ENCODE measurements at regions of chr11 and their contacts with region 1.

Region 1: GRCh38 chr11:103035791-103036434 is 56.0 kb downstream of the DCUN1D5 start:
- DNase-seq: peak; percentile 76
- H3K4me3 Mint-ChIP-seq: peak overlapping the region; percentile 17
- H3K27ac Mint-ChIP-seq: peak overlapping the region; percentile 90
- H3K4me1 Mint-ChIP-seq: peaks cover 26% of the 10 kb centered on the region
- H3K27me3 Mint-ChIP-seq: peaks cover 4% of the 10 kb centered on the region

Region 2: GRCh38 chr11:102577182-102577581 is 458.7 kb before region 1 on chr11:
- CTCF ChIA-PET with region 1: no interaction called
- intact Hi-C with region 1: no loop called
- DNase-seq: no peak
- H3K4me3 Mint-ChIP-seq: no peak overlapping the region
- H3K27ac Mint-ChIP-seq: peak overlapping the region; percentile 34
- H3K4me1 Mint-ChIP-seq: peaks cover 29% of the 10 kb centered on the region
- H3K27me3 Mint-ChIP-seq: no peaks in the 10 kb centered on the region

Region 3: GRCh38 chr11:102599642-102600261 is 436.2 kb before region 1 on chr11:
- CTCF ChIA-PET with region 1: no interaction called
- intact Hi-C with region 1: loop called (anchors 10 kb)
- DNase-seq: peak; percentile 43
- H3K4me3 Mint-ChIP-seq: no peak overlapping the region
- H3K27ac Mint-ChIP-seq: peak overlapping the region; percentile 75
- H3K4me1 Mint-ChIP-seq: peaks cover 27% of the 10 kb centered on the region
- H3K27me3 Mint-ChIP-seq: no peaks in the 10 kb centered on the region

Region 4: GRCh38 chr11:102955624-102956023 is 80.3 kb before region 1 on chr11 and contains the start of gene MMP13:
- CTCF ChIA-PET with region 1: no interaction called
- intact Hi-C with region 1: no loop called
- DNase-seq: no peak
- H3K4me3 Mint-ChIP-seq: no peak within 1 kb of the TSS
- H3K27ac Mint-ChIP-seq: no peak within 1 kb of the TSS
- H3K4me1 Mint-ChIP-seq: no peaks in the 10 kb centered on the region
- H3K27me3 Mint-ChIP-seq: peaks cover 5% of the 10 kb centered on the region
- total RNA-seq, gene MMP13: not detected

Region 5: DNA sequence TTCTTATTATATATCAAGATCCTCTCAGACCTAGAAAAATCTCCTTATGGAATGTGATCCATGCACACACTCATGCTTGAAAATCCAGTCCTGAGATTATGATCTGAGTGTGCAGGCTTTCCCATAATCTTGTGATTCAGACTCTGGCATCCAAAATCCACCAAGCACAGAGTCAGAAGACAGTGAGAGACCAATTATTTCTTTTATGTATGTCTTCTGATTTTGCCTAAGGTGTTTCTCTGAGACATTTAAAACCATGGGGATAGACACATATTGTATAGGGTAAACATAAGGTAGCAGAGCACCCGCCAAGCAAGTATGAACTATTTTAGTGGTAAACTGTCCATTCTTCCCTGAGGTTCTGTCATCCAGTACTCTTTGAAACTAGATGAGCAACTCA is 28.4 kb before region 1 on chr11:
- CTCF ChIA-PET with region 1: no interaction called
- intact Hi-C with region 1: no loop called
- DNase-seq: no peak
- H3K4me3 Mint-ChIP-seq: no peak overlapping the region
- H3K27ac Mint-ChIP-seq: no peak overlapping the region
- H3K4me1 Mint-ChIP-seq: no peaks in the 10 kb centered on the region
- H3K27me3 Mint-ChIP-seq: peaks cover 14% of the 10 kb centered on the region

Region 6: DNA sequence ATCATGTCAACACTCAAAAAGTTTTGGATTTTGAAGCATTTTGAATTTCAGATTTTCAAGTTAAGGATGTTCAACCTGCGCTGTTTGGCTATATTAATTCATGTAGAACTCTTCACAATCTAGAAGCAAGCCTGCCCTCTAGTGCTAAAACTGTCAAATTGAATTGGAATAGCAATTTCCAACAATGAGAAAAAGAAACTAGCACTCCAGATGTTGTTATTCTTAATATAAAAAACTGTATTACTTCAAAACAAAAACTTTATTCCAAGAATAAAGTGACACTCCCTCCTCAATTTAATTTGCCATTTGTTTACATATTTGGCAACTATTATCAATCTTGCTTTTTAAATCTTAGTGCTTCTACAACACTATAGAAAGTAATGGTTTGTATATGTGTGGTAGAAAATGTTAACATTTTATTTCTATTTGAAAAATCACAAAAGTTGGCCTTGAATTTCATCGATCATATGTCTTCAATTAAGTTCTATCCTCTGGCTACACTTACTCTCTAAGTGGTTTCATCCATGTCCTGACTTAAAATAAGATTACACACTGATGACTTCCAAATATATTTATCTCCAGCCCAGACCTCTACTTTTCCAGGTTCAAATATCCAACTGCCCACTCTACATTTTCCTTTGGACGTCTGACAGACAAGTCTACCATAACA is 19.4 kb after region 1 on chr11:
- CTCF ChIA-PET with region 1: interaction called, 13 read pairs
- intact Hi-C with region 1: loop called (anchors 1 kb)
- DNase-seq: no peak
- H3K4me3 Mint-ChIP-seq: no peak overlapping the region
- H3K27ac Mint-ChIP-seq: no peak overlapping the region
- H3K4me1 Mint-ChIP-seq: peaks cover 17% of the 10 kb centered on the region
- H3K27me3 Mint-ChIP-seq: no peaks in the 10 kb centered on the region

Region 7: GRCh38 chr11:103108933-103109817 is 73.3 kb after region 1 on chr11 and contains the start of gene DYNC2H1:
- CTCF ChIA-PET with region 1: interaction called, 5 read pairs
- intact Hi-C with region 1: loop called (anchors 1 kb)
- DNase-seq: peak; percentile 90
- H3K4me3 Mint-ChIP-seq: peak within 1 kb of the TSS; percentile 84
- H3K27ac Mint-ChIP-seq: peak within 1 kb of the TSS; percentile 72
- H3K4me1 Mint-ChIP-seq: peaks cover 7% of the 10 kb centered on the region
- H3K27me3 Mint-ChIP-seq: no peaks in the 10 kb centered on the region
- total RNA-seq, gene DYNC2H1: 1.9 to 2.8 TPM